MCF 10A (cell line): ENCODE measurements at regions of chr11 and their contacts with region 1.

Region 1: DNA sequence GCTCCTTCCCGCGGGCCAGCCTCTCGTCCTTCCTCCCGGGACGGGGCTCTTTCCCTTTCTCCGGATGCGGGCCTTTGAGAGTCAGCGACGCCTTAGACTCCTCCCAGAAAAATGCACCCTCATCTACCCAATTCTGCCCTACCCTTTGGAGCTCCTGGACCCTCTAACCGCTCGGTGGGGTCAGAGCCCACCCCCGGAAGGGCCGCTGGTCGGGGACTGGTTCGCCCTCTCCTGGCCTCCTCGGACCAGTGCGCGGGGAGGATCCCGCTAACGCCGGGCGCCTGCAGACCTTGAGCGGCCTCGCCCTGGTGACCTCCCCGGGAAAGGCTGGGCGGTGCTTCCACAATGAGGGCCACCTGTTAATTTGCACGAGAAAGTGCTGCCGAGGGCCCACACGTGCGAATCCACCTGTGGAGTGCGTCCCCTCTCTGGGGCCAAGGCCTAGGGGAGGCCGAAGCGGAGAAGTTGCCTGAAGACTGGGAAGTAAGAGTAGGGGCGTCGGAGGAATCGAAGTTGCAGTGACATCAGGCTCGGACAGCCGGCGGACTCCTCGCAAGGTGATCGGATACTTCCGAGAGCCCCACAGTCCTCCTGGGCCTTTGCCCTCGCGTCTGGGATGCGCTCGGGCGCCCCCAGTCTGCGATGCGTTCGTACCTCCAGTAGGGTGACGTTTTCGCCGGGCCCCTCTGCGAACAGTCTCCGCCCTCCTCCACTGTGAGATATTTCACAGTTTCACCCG is 61.5 kb downstream of the ENDOD1 start:
- DNase-seq: peak; percentile 95
- H3K4me3 Mint-ChIP-seq: peak overlapping the region; percentile 81
- H3K27ac Mint-ChIP-seq: peak overlapping the region; percentile 82
- H3K4me1 Mint-ChIP-seq: peaks cover 44% of the 10 kb centered on the region
- H3K27me3 Mint-ChIP-seq: no peaks in the 10 kb centered on the region
- CTCF ChIP-seq: peak; percentile 63

Region 2: DNA sequence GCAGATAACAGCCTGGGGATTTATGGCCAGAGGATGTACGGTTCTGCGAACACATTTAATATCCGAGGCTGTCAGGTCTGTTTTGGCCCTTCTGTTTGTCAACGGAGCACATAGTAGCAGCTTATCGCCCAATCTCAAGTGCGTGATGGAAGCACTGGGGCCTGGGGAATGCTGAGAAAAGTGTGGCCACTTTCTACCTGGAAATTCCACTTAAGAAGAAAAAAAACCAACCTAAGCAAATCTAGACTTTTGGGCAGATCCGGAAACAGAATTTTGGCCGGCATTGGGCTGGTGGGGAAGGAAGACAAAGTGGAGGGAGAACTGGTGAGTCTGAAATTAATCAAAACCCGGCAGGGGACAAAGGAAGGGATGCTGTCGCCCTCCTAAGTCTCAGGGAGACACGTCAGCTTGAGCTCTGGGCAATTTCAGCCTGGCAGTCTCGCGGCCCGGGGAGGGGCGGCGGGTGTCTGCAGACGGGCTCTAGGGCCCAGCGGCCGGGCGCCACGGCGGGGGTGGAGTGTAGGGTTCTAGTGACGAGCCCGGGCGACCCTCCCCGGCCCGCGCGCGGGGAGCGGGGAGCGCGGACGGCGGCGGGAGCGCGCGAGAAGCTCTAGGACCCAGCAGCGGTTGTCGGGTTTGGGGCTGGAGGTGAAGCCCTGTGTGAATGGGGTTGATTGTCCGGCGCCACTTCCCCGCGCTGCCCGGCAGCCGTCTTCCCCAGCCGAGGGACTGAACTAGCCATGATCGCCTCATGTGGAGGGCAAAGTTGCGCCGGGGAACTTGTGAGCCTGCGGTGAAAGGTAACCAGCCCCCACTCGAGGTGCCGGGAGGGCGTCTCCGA is 383.1 kb before region 1 on chr11 and contains the start of gene AMOTL1:
- CTCF ChIA-PET with region 1: no interaction called
- POLR2A ChIA-PET with region 1: no interaction called
- intact Hi-C with region 1: loop called (anchors 10 kb)
- DNase-seq: peak; percentile 83
- H3K4me3 Mint-ChIP-seq: peak within 1 kb of the TSS; percentile 89
- H3K27ac Mint-ChIP-seq: peak within 1 kb of the TSS; percentile 90
- H3K4me1 Mint-ChIP-seq: peaks cover 32% of the 10 kb centered on the region
- H3K27me3 Mint-ChIP-seq: no peaks in the 10 kb centered on the region
- CTCF ChIP-seq: no peak
- total RNA-seq, gene AMOTL1: 76.6 and 77.0 TPM in 2 replicates

Region 3: GRCh38 chr11:95044010-95044409 is 107.1 kb before region 1 on chr11:
- CTCF ChIA-PET with region 1: no interaction called
- POLR2A ChIA-PET with region 1: no interaction called
- intact Hi-C with region 1: no loop called
- DNase-seq: no peak
- H3K4me3 Mint-ChIP-seq: no peak overlapping the region
- H3K27ac Mint-ChIP-seq: no peak overlapping the region
- H3K4me1 Mint-ChIP-seq: no peaks in the 10 kb centered on the region
- H3K27me3 Mint-ChIP-seq: peaks cover 47% of the 10 kb centered on the region
- CTCF ChIP-seq: no peak

Region 4: GRCh38 chr11:95084509-95084908 is 66.6 kb before region 1 on chr11:
- CTCF ChIA-PET with region 1: interaction called, 11 read pairs
- POLR2A ChIA-PET with region 1: interaction called, 34 read pairs
- intact Hi-C with region 1: no loop called
- DNase-seq: peak; percentile 79
- H3K4me3 Mint-ChIP-seq: no peak overlapping the region
- H3K27ac Mint-ChIP-seq: no peak overlapping the region
- H3K4me1 Mint-ChIP-seq: peaks cover 15% of the 10 kb centered on the region
- H3K27me3 Mint-ChIP-seq: no peaks in the 10 kb centered on the region
- CTCF ChIP-seq: no peak

Region 5: GRCh38 chr11:95138448-95138847 is 12.7 kb before region 1 on chr11:
- CTCF ChIA-PET with region 1: interaction called, 16 read pairs
- POLR2A ChIA-PET with region 1: interaction called, 45 read pairs
- intact Hi-C with region 1: no loop called
- DNase-seq: peak; percentile 20
- H3K4me3 Mint-ChIP-seq: no peak overlapping the region
- H3K27ac Mint-ChIP-seq: no peak overlapping the region
- H3K4me1 Mint-ChIP-seq: peaks cover 13% of the 10 kb centered on the region
- H3K27me3 Mint-ChIP-seq: no peaks in the 10 kb centered on the region
- CTCF ChIP-seq: no peak

Region 6: DNA sequence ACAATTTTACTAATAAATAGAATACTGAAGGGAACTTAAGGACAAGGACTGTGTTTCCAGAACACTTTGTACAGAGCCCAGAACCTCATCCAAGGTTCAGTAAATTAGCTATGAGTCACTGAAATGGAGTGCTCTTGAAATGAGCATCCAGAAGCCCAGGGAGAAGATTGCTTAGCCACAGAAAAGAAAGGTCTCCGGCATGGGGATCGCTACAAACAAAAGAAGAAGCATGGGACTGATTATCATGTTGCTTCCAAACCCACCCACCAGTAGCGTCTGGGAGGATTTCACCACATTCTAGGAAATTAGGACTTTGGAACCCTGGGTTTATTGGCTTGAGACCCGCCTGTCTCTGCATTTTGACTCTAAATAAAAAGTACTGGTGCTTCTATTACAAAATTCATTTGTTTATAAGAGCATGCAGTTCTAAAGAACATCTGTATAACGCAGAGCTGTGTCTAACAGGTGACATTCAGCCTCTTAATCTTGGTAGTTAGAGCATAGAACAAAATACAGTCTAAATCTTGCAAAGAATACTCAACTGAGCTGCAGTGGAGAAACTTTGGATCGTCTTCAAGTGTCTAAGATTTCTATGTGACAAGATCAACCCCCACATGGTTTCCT is 115.7 kb after region 1 on chr11:
- CTCF ChIA-PET with region 1: no interaction called
- POLR2A ChIA-PET with region 1: no interaction called
- intact Hi-C with region 1: no loop called
- DNase-seq: no peak
- H3K4me3 Mint-ChIP-seq: no peak overlapping the region
- H3K27ac Mint-ChIP-seq: no peak overlapping the region
- H3K4me1 Mint-ChIP-seq: peaks cover 8% of the 10 kb centered on the region
- H3K27me3 Mint-ChIP-seq: no peaks in the 10 kb centered on the region
- CTCF ChIP-seq: no peak

Region 7: GRCh38 chr11:95521133-95521542 is 370.0 kb after region 1 on chr11:
- CTCF ChIA-PET with region 1: interaction called, 4 read pairs
- POLR2A ChIA-PET with region 1: no interaction called
- intact Hi-C with region 1: loop called (anchors 10 kb)
- DNase-seq: peak; percentile 89
- H3K4me3 Mint-ChIP-seq: no peak overlapping the region
- H3K27ac Mint-ChIP-seq: peak overlapping the region; percentile 50
- H3K4me1 Mint-ChIP-seq: peaks cover 32% of the 10 kb centered on the region
- H3K27me3 Mint-ChIP-seq: no peaks in the 10 kb centered on the region
- CTCF ChIP-seq: no peak

Region 8: DNA sequence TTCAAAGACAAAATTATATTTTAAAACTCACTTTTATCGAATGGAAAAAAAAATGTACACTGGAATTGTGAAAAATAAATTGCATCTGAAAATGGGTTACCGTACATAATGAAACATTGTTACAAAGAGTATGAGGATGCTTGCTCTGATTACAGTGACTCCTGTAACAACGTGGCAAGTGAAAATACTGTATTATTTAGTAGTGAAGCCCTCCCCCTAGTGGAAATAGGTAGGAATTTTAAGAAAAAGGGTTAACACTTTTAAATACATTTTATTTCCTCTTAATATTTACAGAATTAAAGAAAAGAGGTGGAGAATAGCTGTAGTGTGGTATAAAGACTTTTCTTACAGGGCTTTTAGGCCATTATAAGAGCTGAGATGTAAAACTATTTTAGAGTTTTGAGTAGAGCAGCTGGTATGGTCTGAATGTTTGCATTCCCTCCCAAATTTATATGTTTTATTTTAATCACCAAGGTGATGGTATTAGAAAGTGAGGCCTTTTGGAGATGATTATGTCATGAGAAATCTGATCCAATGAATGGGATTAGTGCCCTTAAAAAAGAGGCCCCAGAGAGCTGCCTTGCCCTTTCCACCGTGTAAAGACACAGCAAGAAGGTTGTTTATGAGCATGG is 613.3 kb after region 1 on chr11:
- CTCF ChIA-PET with region 1: interaction called, 302 read pairs
- POLR2A ChIA-PET with region 1: interaction called, 9 read pairs
- intact Hi-C with region 1: loop called (anchors 1 kb)
- DNase-seq: peak; percentile 54
- H3K4me3 Mint-ChIP-seq: no peak overlapping the region
- H3K27ac Mint-ChIP-seq: no peak overlapping the region
- H3K4me1 Mint-ChIP-seq: peaks cover 10% of the 10 kb centered on the region
- H3K27me3 Mint-ChIP-seq: no peaks in the 10 kb centered on the region
- CTCF ChIP-seq: peak; percentile 61